Mammary epithelial cell (primary cell): ENCODE measurements at regions of chr6 and their contacts with region 1.

Region 1: DNA sequence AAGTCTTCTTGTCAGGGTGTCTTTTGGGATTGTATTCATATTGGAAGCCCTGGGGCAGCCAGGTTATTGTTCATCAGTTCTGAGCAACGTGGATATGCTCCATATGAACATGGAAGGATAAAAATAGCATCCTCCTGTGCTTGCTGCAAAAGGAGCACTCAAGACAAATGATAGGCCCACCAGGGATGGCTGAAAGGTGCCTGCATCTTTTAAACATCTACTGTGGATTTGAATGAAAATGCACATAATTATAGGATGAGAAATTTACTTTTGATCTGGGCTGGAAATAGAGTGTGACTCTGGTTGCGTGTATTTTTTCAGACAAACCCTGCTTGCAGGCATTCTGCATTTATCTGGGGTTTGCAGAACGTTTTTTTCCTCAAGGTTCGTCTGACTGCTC is 299.1 kb downstream of the PACRG start:
- DNase-seq: no peak
- H3K4me3 ChIP-seq: no peak overlapping the region
- H3K27ac ChIP-seq: no peak overlapping the region
- H3K4me1 ChIP-seq: no peaks in the 10 kb centered on the region
- H3K27me3 ChIP-seq: no peaks in the 10 kb centered on the region
- CTCF ChIP-seq: no peak

Region 2: DNA sequence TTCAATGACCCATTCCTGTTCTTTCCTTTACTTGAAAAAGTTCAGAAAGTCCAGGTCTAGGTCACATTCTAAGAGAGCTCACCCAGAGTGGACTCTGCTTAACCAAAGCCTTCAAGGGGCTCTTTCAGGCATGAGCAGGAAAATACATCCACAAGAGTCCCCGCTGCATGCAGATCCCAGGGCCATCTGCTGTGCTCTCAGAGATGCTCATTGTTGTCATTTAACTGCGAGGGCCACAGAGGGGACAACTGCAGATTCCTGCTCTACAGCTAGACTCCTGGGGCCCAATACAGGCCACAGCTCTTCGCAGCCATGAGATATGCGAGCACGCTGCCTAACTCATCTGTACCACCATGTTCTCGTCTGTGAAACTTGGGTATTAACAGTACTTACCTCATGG is 92.0 kb after region 1 on chr6:
- CTCF ChIA-PET with region 1: no interaction called
- dilution Hi-C with region 1: loop called (anchors 5 kb)
- in situ Hi-C with region 1: no loop called
- intact Hi-C with region 1: no loop called
- DNase-seq: no peak
- H3K4me3 ChIP-seq: no peak overlapping the region
- H3K27ac ChIP-seq: no peak overlapping the region
- H3K4me1 ChIP-seq: no peaks in the 10 kb centered on the region
- H3K27me3 ChIP-seq: no peaks in the 10 kb centered on the region
- CTCF ChIP-seq: no peak